ENCODE measurements at regions of chr12 and their contacts with region 1.

Region 1: DNA sequence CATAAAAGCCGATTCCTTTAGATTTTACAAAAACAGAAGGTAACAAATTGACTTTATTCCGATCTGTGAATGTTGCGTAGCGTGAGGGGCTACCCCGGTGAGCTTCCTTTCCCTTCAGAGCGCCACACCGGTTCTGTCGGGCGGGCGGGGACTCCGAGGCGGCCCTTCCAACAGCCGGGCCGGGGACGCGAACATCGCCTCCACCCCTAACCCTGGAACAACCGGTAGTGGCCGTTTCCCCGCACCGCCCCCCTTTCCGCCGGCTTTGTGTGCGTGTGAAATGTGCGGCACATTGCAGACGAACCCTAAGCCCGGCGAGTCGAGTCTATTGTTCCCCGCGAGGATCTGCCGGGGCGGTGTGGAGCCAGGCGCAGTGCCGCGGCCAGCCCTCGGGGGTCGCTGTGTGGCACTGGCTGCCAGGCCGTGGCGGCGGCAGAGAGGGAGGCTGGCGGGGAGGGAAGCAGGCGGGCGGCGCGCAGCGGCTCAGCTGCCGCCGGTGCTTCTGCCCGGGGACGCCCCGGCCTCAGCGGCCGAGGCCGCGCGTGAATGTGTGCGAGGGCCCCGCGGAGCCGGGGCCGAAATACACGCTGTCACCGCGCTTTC is 775 bp upstream of the ARID2 start:
- DNase-seq: peak; percentile 73
- H3K4me3 ChIP-seq: peak overlapping the region; percentile 88
- H3K27me3 ChIP-seq: no peaks in the 10 kb centered on the region
- CTCF ChIP-seq: peak; percentile 89

Region 2: GRCh38 chr12:45543906-45544315 is 184.8 kb before region 1 on chr12:
- CTCF ChIA-PET with region 1: interaction called, 73 read pairs
- POLR2A ChIA-PET with region 1: no interaction called
- DNase-seq: peak; percentile 18
- H3K4me3 ChIP-seq: no peak overlapping the region
- H3K27me3 ChIP-seq: peaks cover 5% of the 10 kb centered on the region
- CTCF ChIP-seq: peak; percentile 86

Region 3: GRCh38 chr12:45713078-45713477 is 15.7 kb before region 1 on chr12:
- CTCF ChIA-PET with region 1: interaction called, 15 read pairs
- POLR2A ChIA-PET with region 1: no interaction called
- DNase-seq: no peak
- H3K4me3 ChIP-seq: no peak overlapping the region
- H3K27me3 ChIP-seq: no peaks in the 10 kb centered on the region
- CTCF ChIP-seq: no peak